ENCODE measurements at regions of chr17 and their contacts with region 1.

Region 1: DNA sequence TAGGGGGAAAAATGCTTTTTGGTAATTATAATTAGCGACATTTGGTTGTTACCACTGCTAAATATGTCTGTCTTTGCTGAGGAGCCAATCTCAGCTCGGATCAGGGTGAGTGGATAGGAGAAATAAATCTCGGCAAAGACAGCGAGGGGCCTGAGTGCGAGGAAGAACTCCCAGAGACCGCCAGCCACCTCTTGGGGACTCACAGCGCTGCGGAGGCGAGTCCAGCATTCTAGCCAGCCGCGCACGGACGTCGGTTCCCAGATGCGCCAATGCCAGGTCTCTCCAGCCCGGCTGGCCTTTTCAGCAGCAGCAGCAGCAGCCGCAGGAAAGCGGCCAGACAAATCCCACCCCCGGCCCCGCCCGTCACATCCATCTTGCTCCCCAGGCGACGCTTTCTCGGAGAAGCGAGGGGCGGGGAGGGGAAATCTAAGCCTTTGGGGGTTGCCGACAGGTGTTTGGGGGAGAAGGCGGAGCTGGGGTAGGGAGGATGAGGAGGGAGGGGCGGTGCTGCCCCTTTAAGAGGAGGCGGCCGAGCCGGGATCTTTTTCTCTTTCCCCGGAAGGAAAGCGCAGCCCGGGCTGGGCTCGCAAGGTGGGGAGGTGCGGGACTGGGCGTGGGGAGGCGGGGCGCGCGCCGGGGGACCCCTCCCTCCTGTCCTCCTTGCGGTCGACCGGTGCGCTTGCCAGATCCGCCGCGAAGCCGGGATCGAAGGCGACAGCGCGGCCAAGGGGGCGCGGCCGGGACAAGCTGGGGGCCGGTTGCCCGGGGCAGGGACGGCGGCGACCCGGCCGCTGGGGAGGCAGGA is at the start of gene ITGA3:
- DNase-seq: no peak
- ATAC-seq: peak; percentile 69
- H3K4me3 ChIP-seq: peak within 1 kb of the TSS; percentile 63 to 99
- H3K27ac ChIP-seq: peak within 1 kb of the TSS; percentile 99
- H3K4me1 ChIP-seq: peaks cover 69% of the 10 kb centered on the region
- H3K27me3 ChIP-seq: no peaks in the 10 kb centered on the region
- CTCF ChIP-seq: no peak
- total RNA-seq, gene ITGA3: 439 TPM

Region 2: DNA sequence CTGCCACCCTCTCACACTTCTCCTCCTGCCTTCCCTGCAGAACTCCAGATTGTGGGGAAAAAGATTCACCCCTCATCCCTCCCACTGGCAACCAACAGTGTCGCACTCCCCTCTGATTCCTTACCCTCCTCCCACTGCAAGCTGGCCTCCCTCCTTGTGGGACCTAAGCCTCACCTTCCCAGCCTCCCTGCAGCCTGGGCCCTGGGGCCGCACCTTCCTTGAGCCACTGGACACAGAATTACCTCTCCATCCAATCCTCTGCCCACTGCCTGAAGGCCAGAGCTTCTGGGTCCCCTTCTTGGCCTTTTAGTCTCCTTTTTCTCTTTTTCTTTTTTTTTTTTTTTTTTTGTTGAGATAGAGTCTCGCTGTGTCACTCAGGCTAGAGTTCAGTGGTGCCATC is 526.7 kb before region 1 on chr17:
- CTCF ChIA-PET with region 1: no interaction called
- POLR2A ChIA-PET with region 1: interaction called, 11 read pairs
- in situ Hi-C with region 1: no loop called
- intact Hi-C with region 1: no loop called
- DNase-seq: no peak
- ATAC-seq: no peak
- H3K4me3 ChIP-seq: no peak overlapping the region
- H3K27ac ChIP-seq: no peak overlapping the region
- H3K4me1 ChIP-seq: no peaks in the 10 kb centered on the region
- H3K27me3 ChIP-seq: 0 out of 2 replicates have a peak, but pooled peaks cover 6% of the 10 kb centered on the region
- CTCF ChIP-seq: no peak

Region 3: GRCh38 chr17:50026901-50027630 is 28.6 kb before region 1 on chr17:
- CTCF ChIA-PET with region 1: interaction called, 15 read pairs
- POLR2A ChIA-PET with region 1: interaction called, 4 read pairs
- in situ Hi-C with region 1: no loop called
- intact Hi-C with region 1: loop called (anchors 1 kb)
- DNase-seq: no peak
- ATAC-seq: peak; percentile 64
- H3K4me3 ChIP-seq: peak overlapping the region; percentile 33 to 56
- H3K27ac ChIP-seq: peak overlapping the region; percentile 91
- H3K4me1 ChIP-seq: peaks cover 34% of the 10 kb centered on the region
- H3K27me3 ChIP-seq: no peaks in the 10 kb centered on the region
- CTCF ChIP-seq: peak; percentile 96

Region 4: GRCh38 chr17:50043290-50044148 is 12.1 kb before region 1 on chr17:
- CTCF ChIA-PET with region 1: no interaction called
- POLR2A ChIA-PET with region 1: interaction called, 17 read pairs
- in situ Hi-C with region 1: no loop called
- intact Hi-C with region 1: no loop called
- DNase-seq: no peak
- ATAC-seq: 0 out of 2 replicates have a peak, but pooled peaks have one; percentile 14
- H3K4me3 ChIP-seq: no peak overlapping the region
- H3K27ac ChIP-seq: peak overlapping the region; percentile 57
- H3K4me1 ChIP-seq: peaks cover 39% of the 10 kb centered on the region
- H3K27me3 ChIP-seq: no peaks in the 10 kb centered on the region
- CTCF ChIP-seq: no peak

Region 5: GRCh38 chr17:50094753-50095619 is 39.4 kb after region 1 on chr17 and contains the start of gene PDK2:
- CTCF ChIA-PET with region 1: interaction called, 16 read pairs
- POLR2A ChIA-PET with region 1: no interaction called
- in situ Hi-C with region 1: no loop called
- intact Hi-C with region 1: no loop called
- DNase-seq: no peak
- ATAC-seq: peak; percentile 89
- H3K4me3 ChIP-seq: peak within 1 kb of the TSS; percentile 73 to 75
- H3K27ac ChIP-seq: peak within 1 kb of the TSS; percentile 86
- H3K4me1 ChIP-seq: peaks cover 32% of the 10 kb centered on the region
- H3K27me3 ChIP-seq: no peaks in the 10 kb centered on the region
- CTCF ChIP-seq: no peak
- total RNA-seq, gene PDK2: 46.0 TPM

Measured in Panc1 (cell line).